PC-9 (cell line): ENCODE measurements at regions of chr7 and their contacts with region 1.

Region 1: DNA sequence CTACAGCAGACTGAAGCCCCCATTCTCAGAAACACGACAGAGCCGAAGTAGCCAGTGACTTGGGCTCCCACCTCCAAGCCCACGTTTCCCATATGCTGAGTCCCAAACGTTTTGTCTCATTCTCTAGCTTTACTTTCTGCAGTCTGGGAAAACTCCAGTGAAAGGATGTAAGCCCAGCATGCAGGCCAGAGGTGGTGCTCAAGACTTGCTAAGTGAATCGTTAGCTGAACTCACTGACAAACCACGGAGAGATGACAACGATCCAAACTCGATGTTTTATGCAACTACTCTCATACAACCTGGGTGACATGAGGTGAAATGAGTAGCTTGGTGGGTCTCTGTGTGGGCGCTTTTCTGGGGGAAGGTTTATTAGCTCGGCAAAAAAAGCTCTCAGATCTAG is 731.8 kb downstream of the SUGCT start:
- DNase-seq: no peak
- H3K4me3 ChIP-seq: no peak overlapping the region
- H3K27ac ChIP-seq: no peak overlapping the region
- H3K4me1 ChIP-seq: no peaks in the 10 kb centered on the region
- H3K27me3 ChIP-seq: no peaks in the 10 kb centered on the region
- CTCF ChIP-seq: no peak

Region 2: GRCh38 chr7:40673285-40673684 is 193.3 kb before region 1 on chr7:
- CTCF ChIA-PET with region 1: no interaction called
- POLR2A ChIA-PET with region 1: no interaction called
- intact Hi-C with region 1: no loop called
- DNase-seq: no peak
- H3K4me3 ChIP-seq: no peak overlapping the region
- H3K27ac ChIP-seq: no peak overlapping the region
- H3K4me1 ChIP-seq: no peaks in the 10 kb centered on the region
- H3K27me3 ChIP-seq: no peaks in the 10 kb centered on the region
- CTCF ChIP-seq: no peak

Region 3: DNA sequence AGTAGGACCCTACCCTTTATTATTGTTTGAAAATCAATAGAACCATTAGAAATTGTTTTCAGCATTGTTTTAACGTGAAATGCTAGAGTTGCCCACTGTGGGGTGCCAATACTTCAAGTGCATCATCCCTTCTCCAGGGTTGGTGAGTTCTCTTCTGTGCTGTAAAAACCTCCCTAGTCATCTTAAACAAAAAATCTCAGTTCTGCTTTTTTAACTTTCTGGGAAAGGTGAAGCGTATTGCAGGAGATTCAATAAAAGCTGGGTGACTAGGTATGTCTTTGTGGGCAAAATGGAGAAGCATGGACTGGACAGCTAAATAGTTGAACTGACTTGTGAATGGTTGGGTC is 32.7 kb before region 1 on chr7:
- CTCF ChIA-PET with region 1: no interaction called
- POLR2A ChIA-PET with region 1: no interaction called
- intact Hi-C with region 1: no loop called
- DNase-seq: no peak
- H3K4me3 ChIP-seq: no peak overlapping the region
- H3K27ac ChIP-seq: no peak overlapping the region
- H3K4me1 ChIP-seq: no peaks in the 10 kb centered on the region
- H3K27me3 ChIP-seq: no peaks in the 10 kb centered on the region
- CTCF ChIP-seq: peak; percentile 60

Region 4: GRCh38 chr7:41003031-41003925 is 136.7 kb after region 1 on chr7:
- CTCF ChIA-PET with region 1: interaction called, 10 read pairs
- POLR2A ChIA-PET with region 1: no interaction called
- intact Hi-C with region 1: no loop called
- DNase-seq: peak; percentile 59 to 90
- H3K4me3 ChIP-seq: no peak overlapping the region
- H3K27ac ChIP-seq: peak overlapping the region; percentile 10
- H3K4me1 ChIP-seq: peaks cover 54% of the 10 kb centered on the region
- H3K27me3 ChIP-seq: no peaks in the 10 kb centered on the region
- CTCF ChIP-seq: peak; percentile 95

Region 5: DNA sequence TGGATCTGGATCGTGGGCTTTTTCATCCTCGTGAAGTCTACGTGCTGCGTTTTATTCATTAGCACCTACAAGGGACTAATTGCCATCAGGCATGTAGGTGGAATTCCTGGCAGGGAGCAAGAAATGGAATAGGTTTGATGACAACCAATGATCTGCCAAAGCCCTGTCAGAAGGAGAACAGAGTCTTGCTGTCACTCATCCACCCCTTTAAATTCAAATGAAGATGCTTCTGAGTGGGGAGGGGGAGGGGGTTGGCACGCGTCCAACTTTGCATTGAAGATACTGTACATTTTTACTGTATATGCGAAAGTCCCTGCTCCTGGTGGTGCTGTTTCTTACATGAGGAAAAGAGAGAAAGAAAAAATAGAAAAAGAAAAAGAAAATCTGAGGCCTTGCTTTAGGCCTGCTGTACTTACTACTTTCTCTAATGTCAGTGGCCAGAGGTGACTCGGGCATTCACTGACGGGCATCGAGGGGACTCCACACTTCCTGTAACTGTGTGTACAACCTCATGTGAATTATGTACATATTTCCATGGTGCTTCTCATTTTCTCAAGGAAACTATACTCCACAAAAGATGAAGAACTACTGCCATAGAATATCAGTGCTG is 267.2 kb after region 1 on chr7:
- CTCF ChIA-PET with region 1: no interaction called
- POLR2A ChIA-PET with region 1: no interaction called
- intact Hi-C with region 1: no loop called
- DNase-seq: no peak
- H3K4me3 ChIP-seq: no peak overlapping the region
- H3K27ac ChIP-seq: no peak overlapping the region
- H3K4me1 ChIP-seq: peaks cover 14% of the 10 kb centered on the region
- H3K27me3 ChIP-seq: no peaks in the 10 kb centered on the region
- CTCF ChIP-seq: no peak